ENCODE measurements at regions of chr7 and their contacts with region 1.

Region 1: GRCh38 chr7:36244429-36244828 is 91.4 kb downstream of the EEPD1 start:
- DNase-seq: no peak
- ATAC-seq: no peak
- H3K4me3 ChIP-seq: no peak overlapping the region
- H3K4me3 Mint-ChIP-seq: no peak overlapping the region
- H3K27ac ChIP-seq: no peak overlapping the region
- H3K27ac Mint-ChIP-seq: no peak overlapping the region
- H3K4me1 ChIP-seq: no peaks in the 10 kb centered on the region
- H3K4me1 Mint-ChIP-seq: no peaks in the 10 kb centered on the region
- H3K27me3 ChIP-seq: no peaks in the 10 kb centered on the region
- H3K27me3 Mint-ChIP-seq: no peaks in the 10 kb centered on the region

Region 2: GRCh38 chr7:36037121-36037662 is 207.2 kb before region 1 on chr7:
- CTCF ChIA-PET with region 1: no interaction called
- POLR2A ChIA-PET with region 1: interaction called in 1 of 2 experiments, 11 read pairs
- DNase-seq: peak in 3 of 35 experiments; percentile 4 to 32 (median 6)
- ATAC-seq: no peak
- H3K4me3 ChIP-seq: no peak overlapping the region
- H3K4me3 Mint-ChIP-seq: no peak overlapping the region
- H3K27ac ChIP-seq: no peak overlapping the region
- H3K27ac Mint-ChIP-seq: no peak overlapping the region
- H3K4me1 ChIP-seq: no peaks in the 10 kb centered on the region
- H3K4me1 Mint-ChIP-seq: peaks cover 0 to 11% (median 0%) of the 10 kb centered on the region in 3 donors
- H3K27me3 ChIP-seq: peaks cover 0 to 30% of the 10 kb centered on the region in 2 experiments
- H3K27me3 Mint-ChIP-seq: peaks cover 16 to 19% of the 10 kb centered on the region in 2 donors

Region 3: GRCh38 chr7:36300696-36301350 is 56.4 kb after region 1 on chr7:
- CTCF ChIA-PET with region 1: no interaction called
- POLR2A ChIA-PET with region 1: no interaction called
- DNase-seq: no peak
- ATAC-seq: no peak
- H3K4me3 ChIP-seq: no peak overlapping the region
- H3K4me3 Mint-ChIP-seq: no peak overlapping the region
- H3K27ac ChIP-seq: no peak overlapping the region
- H3K27ac Mint-ChIP-seq: no peak overlapping the region
- H3K4me1 ChIP-seq: no peaks in the 10 kb centered on the region
- H3K4me1 Mint-ChIP-seq: no peaks in the 10 kb centered on the region
- H3K27me3 ChIP-seq: no peaks in the 10 kb centered on the region
- H3K27me3 Mint-ChIP-seq: no peaks in the 10 kb centered on the region

Measured in T-cell (primary cell).